Dendritic cell treated with granulocyte-macrophage colony-stimulating factor and Interleukin-4, amounts not matched to agents 40 ng/mL and 50 ng/mL, for 4 days (primary cell): ENCODE measurements at regions of chr3 and their contacts with region 1.

Region 1: DNA sequence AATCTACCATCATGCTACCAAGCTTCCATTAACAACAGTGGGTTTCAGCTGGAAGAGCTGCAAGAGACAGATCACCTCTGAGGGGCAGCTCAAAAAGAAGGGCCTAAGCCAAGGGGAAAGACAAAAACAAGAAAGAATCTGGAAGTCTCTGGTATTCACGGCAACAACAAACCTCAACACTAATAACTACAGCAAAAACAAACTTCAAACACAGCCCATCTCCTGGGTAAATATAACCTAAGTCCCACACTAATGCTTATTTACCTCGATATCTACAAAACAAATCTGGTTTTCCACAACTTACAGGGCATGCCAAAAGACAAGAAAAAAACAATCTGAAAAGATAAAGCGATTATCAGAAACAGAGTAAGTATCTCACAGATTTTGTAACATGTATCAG is 29.7 kb downstream of the TOP2B start:
- H3K4me3 Mint-ChIP-seq: no peak overlapping the region
- H3K27ac Mint-ChIP-seq: peak overlapping the region; percentile 24
- H3K4me1 Mint-ChIP-seq: no peaks in the 10 kb centered on the region
- H3K27me3 Mint-ChIP-seq: no peaks in the 10 kb centered on the region

Region 2: GRCh38 chr3:25604107-25604805 is 30.8 kb before region 1 on chr3:
- intact Hi-C with region 1: loop called (anchors 5 kb)
- H3K4me3 Mint-ChIP-seq: no peak overlapping the region
- H3K27ac Mint-ChIP-seq: peak overlapping the region; percentile 55
- H3K4me1 Mint-ChIP-seq: peaks cover 20% of the 10 kb centered on the region
- H3K27me3 Mint-ChIP-seq: no peaks in the 10 kb centered on the region